Right cardiac atrium (tissue), 5 donors: ENCODE measurements at regions of chr17 and their contacts with region 1.

Region 1: GRCh38 chr17:42527273-42527703 is 8.8 kb upstream of the NAGLU start:
- DNase-seq: peak; percentile 69 to 86 (median 75)
- ATAC-seq: peak; percentile 82 to 84
- H3K4me3 ChIP-seq: no peak overlapping the region
- H3K27ac ChIP-seq: no peak overlapping the region
- H3K4me1 ChIP-seq: no peaks in the 10 kb centered on the region
- H3K27me3 ChIP-seq: no peaks in the 10 kb centered on the region

Region 2: GRCh38 chr17:42312285-42313130 is 214.8 kb before region 1 on chr17:
- intact Hi-C with region 1: loop called in 1 of 4 experiments (anchors 5 kb)
- DNase-seq: peak; percentile 90 to 95 (median 95)
- ATAC-seq: peak; percentile 79 to 81
- H3K4me3 ChIP-seq: no peak overlapping the region
- H3K27ac ChIP-seq: no peak overlapping the region
- H3K4me1 ChIP-seq: peaks cover 3% of the 10 kb centered on the region
- H3K27me3 ChIP-seq: no peaks in the 10 kb centered on the region

Region 3: GRCh38 chr17:42438600-42439567 is 88.4 kb before region 1 on chr17:
- intact Hi-C with region 1: loop called in 1 of 4 experiments (anchors 10 kb)
- DNase-seq: peak in 1 of 3 donors; percentile 66
- ATAC-seq: no peak
- H3K4me3 ChIP-seq: no peak overlapping the region
- H3K27ac ChIP-seq: no peak overlapping the region
- H3K4me1 ChIP-seq: no peaks in the 10 kb centered on the region
- H3K27me3 ChIP-seq: no peaks in the 10 kb centered on the region